IMR-90 (cell line): ENCODE measurements at regions of chr6 and their contacts with region 1.

Region 1: DNA sequence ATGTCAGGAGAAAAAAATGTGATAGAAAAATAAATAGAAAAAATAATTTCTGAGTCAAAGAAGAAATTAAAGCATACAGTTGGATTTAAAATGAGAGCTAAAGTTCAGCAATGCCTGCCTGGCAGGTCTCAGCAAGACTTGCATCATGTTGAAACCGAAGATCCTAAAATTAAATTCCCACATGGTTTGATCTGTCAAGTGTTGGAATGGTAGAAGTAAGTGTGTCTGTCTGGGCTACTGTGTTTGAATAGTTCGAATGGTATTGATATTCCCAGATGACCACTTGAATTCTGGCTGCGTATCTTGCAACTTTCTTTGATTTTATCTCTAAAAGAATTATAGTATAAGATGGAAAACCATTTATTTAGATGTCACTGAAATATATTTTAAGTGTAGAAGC is 1349.6 kb downstream of the EPHA7 start:
- DNase-seq: no peak
- ATAC-seq: no peak
- H3K4me3 ChIP-seq: no peak overlapping the region
- H3K27ac ChIP-seq: no peak overlapping the region
- H3K4me1 ChIP-seq: no peaks in the 10 kb centered on the region
- H3K27me3 ChIP-seq: no peaks in the 10 kb centered on the region
- CTCF ChIP-seq: no peak
- POLR2A ChIP-seq: no peak
- RAD21 ChIP-seq: no peak

Region 2: DNA sequence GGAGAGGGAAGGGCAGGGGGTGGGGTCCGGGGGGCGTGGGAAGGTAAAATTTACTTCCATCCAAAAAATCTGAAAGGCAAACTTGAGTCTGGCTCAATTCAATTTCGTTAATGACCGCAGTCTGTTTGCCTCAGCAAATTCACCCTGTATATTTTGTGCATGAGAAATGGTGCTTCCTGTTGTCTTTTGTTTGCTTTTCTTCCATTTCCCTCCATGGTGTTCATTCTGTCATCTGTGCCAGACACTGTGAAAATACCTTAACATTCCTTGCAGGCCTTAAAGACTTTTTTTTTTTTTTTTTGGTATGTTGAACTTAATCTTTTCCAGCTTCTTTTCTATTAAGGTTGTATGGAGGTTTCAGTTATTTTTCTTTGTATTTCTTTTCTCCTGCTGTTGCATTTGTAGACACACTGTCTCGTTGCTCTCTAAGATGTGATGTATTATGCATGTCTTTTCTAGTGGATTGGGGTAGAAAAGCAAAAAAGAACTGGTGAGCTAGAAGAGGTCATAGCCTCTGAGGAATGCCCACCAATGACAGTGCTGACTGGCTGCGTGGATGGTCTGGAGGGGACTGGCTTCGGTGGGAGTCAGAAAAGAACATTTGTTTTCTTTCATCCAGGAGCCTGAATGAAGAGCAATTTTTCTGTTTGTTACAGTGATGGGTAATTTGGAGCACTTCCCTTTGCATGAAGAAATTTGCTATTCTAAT is 897.9 kb before region 1 on chr6:
- CTCF ChIA-PET with region 1: no interaction called
- POLR2A ChIA-PET with region 1: interaction called, 11 read pairs
- dilution Hi-C with region 1: no loop called
- in situ Hi-C with region 1: no loop called
- intact Hi-C with region 1: no loop called
- DNase-seq: no peak
- ATAC-seq: no peak
- H3K4me3 ChIP-seq: no peak overlapping the region
- H3K27ac ChIP-seq: no peak overlapping the region
- H3K4me1 ChIP-seq: no peaks in the 10 kb centered on the region
- H3K27me3 ChIP-seq: no peaks in the 10 kb centered on the region
- CTCF ChIP-seq: no peak
- POLR2A ChIP-seq: no peak
- RAD21 ChIP-seq: no peak

Region 3: DNA sequence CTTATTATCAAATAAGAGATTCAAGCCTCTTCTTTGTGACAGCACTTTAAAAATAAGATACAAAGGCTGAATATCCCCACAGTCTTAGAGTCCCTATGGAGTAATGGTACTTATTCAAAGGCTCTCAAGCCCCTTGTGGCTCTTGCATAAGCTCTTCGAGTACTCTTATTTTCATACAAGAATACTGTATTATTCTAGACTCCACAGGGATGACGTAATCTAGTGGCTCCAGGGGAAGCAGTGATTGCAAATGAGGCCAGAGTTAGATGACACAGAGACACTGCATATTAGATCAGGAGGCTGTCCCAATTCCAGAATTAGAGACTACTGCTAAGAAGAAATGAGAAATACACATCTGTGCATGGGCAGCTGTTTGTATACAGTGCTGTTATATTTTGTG is 287.0 kb before region 1 on chr6:
- CTCF ChIA-PET with region 1: no interaction called
- POLR2A ChIA-PET with region 1: no interaction called
- dilution Hi-C with region 1: no loop called
- in situ Hi-C with region 1: no loop called
- intact Hi-C with region 1: no loop called
- DNase-seq: no peak
- ATAC-seq: no peak
- H3K4me3 ChIP-seq: no peak overlapping the region
- H3K27ac ChIP-seq: no peak overlapping the region
- H3K4me1 ChIP-seq: no peaks in the 10 kb centered on the region
- H3K27me3 ChIP-seq: no peaks in the 10 kb centered on the region
- CTCF ChIP-seq: no peak
- POLR2A ChIP-seq: no peak
- RAD21 ChIP-seq: no peak